A549 (cell line): ENCODE measurements at regions of chr3 and their contacts with region 1.

Region 1: DNA sequence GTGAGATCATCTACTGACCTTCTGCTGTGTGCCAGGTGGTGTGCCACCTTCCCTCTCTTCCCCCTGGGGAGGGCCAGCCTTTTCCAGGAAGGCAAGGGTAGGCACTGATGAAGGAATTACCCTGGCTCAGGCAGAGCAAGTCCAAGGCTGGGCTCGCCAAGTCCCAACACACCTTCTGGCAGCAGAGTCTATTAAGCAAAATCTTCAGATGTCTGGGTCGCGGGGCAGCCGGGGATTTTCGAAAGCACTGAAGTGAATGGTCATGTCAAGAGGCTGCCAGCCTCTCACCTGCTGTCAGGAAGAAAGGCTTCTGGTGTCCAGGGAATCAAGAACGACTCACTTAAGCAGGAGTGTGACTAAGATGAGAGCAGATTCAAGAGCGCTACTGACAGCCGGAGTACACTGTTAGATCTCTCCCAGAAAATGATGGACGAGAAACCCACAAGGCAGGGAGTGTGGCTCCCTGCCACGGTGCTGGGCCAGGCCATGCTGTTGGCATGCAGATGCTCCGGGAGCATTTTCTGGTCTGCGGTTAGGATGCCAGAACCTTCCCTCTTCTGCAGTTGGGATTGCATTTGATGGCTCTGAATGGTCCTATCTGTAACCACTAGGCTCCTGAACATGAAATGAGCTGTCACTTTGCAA is 479.8 kb downstream of the SHQ1 start:
- DNase-seq: no peak
- ATAC-seq: no peak
- H3K4me3 ChIP-seq: no peak overlapping the region
- H3K27ac ChIP-seq: no peak overlapping the region
- H3K4me1 ChIP-seq: no peaks in the 10 kb centered on the region
- CTCF ChIP-seq: no peak
- EP300 ChIP-seq: no peak
- POLR2A ChIP-seq: no peak
- RAD21 ChIP-seq: no peak

Region 2: GRCh38 chr3:72487078-72487765 is 118.8 kb after region 1 on chr3:
- CTCF ChIA-PET with region 1: no interaction called
- POLR2A ChIA-PET with region 1: interaction called, 12 read pairs
- DNase-seq: peak; percentile 40 to 54
- ATAC-seq: peak; percentile 79 to 88
- H3K4me3 ChIP-seq: no peak overlapping the region
- H3K27ac ChIP-seq: peak overlapping the region; percentile 56 to 83; a peak in 5 of 6 replicates
- H3K4me1 ChIP-seq: peaks cover 33% of the 10 kb centered on the region
- CTCF ChIP-seq: no peak
- EP300 ChIP-seq: peak in 1 of 2 experiments; percentile 27; a peak in 1 of 5 replicates
- POLR2A ChIP-seq: no peak
- RAD21 ChIP-seq: no peak